Aorta (tissue), 5 donors: ENCODE measurements at regions of chrX and their contacts with region 1.

Region 1: GRCh38 chrX:19121898-19122640 is at the start of gene ADGRG2:
- DNase-seq: peak; percentile 58 to 85
- ATAC-seq: peak; percentile 68
- H3K4me3 ChIP-seq: peak within 1 kb of the TSS; percentile 28 to 47
- H3K27ac ChIP-seq: no peak within 1 kb of the TSS
- H3K4me1 ChIP-seq: no peaks in the 10 kb centered on the region
- H3K27me3 ChIP-seq: no peaks in the 10 kb centered on the region
- total RNA-seq, gene ADGRG2: 1.7 to 4.3 TPM

Region 2: GRCh38 chrX:18390941-18391538 is 731.0 kb before region 1 on chrX:
- intact Hi-C with region 1: loop called in 1 of 2 experiments (anchors 10 kb)
- DNase-seq: peak; percentile 69 to 83
- ATAC-seq: peak; percentile 79
- H3K4me3 ChIP-seq: no peak overlapping the region
- H3K27ac ChIP-seq: no peak overlapping the region
- H3K4me1 ChIP-seq: no peaks in the 10 kb centered on the region
- H3K27me3 ChIP-seq: no peaks in the 10 kb centered on the region

Region 3: DNA sequence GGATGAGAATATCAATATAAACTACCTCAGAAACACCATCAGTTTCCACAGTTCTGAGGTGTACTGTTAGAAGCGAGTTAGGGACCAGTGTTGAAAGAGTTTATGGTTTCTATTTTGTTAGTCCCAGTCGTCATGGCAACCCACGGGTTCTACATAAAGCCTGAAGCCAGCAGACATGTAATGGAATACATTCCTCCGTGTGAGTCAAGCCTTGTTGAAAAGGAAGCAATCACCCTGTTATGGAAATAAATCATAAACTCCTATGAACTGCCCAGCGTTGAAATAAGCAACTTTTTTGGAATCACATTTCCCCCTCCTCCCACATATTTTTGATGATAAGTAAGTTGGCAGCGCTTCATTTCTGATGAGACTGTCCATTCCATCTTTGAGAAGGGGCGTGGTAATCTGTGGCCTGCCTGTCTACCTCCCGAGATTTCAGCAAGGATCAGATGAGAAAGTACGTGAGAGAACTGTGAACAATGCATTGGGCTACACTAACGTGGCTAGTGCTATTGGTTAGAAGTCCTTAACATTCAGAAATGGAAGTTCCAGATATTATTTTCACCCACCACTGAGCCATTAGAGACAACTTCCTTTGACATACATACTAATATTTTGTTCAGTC is 181.3 kb after region 1 on chrX:
- intact Hi-C with region 1: loop called in 1 of 2 experiments (anchors 10 kb)
- DNase-seq: peak in 1 of 2 donors; percentile 67
- ATAC-seq: peak; percentile 88
- H3K4me3 ChIP-seq: no peak overlapping the region
- H3K27ac ChIP-seq: no peak overlapping the region
- H3K4me1 ChIP-seq: no peaks in the 10 kb centered on the region
- H3K27me3 ChIP-seq: no peaks in the 10 kb centered on the region

Region 4: DNA sequence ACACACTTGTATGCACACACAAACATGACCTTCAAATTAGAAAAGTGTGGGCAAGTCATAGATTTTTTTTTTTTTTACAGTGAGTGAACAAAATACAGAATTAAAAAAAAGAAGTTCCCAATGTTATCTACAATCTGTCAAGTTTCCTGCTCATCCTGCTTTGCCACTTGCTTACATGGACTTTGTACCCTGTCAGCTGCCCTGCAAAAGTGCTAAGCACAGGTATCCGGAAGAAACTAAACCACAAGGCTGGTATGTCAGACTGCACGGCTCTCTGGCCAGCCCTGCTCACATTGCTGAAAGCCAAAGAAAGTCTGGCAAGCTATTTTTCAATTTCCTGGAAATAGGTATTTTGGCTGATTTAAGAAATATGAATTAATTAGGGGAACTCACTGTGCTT is 907.7 kb after region 1 on chrX:
- intact Hi-C with region 1: no loop called
- DNase-seq: no peak
- ATAC-seq: no peak
- H3K4me3 ChIP-seq: no peak overlapping the region
- H3K27ac ChIP-seq: no peak overlapping the region
- H3K4me1 ChIP-seq: no peaks in the 10 kb centered on the region
- H3K27me3 ChIP-seq: no peaks in the 10 kb centered on the region